Heart right ventricle (tissue), 16 donors: ENCODE measurements at regions of chr19 and their contacts with region 1.

Region 1: GRCh38 chr19:39532233-39533002 is at the start of gene EID2B:
- DNase-seq: peak; percentile 94 to 97
- ATAC-seq: peak; percentile 97 to 99 (median 99)
- H3K4me3 ChIP-seq: peak within 1 kb of the TSS; percentile 73 to 96 (median 88)
- H3K27ac ChIP-seq: peak within 1 kb of the TSS; percentile 42 to 93 (median 86)
- H3K4me1 ChIP-seq: peaks cover 2 to 27% (median 20%) of the 10 kb centered on the region in 9 donors
- H3K27me3 ChIP-seq: no peaks in the 10 kb centered on the region
- CTCF ChIP-seq: peak; percentile 96 to 99 (median 98)
- total RNA-seq, gene EID2B: 2.2 to 4.7 (median 3.5) TPM

Region 2: DNA sequence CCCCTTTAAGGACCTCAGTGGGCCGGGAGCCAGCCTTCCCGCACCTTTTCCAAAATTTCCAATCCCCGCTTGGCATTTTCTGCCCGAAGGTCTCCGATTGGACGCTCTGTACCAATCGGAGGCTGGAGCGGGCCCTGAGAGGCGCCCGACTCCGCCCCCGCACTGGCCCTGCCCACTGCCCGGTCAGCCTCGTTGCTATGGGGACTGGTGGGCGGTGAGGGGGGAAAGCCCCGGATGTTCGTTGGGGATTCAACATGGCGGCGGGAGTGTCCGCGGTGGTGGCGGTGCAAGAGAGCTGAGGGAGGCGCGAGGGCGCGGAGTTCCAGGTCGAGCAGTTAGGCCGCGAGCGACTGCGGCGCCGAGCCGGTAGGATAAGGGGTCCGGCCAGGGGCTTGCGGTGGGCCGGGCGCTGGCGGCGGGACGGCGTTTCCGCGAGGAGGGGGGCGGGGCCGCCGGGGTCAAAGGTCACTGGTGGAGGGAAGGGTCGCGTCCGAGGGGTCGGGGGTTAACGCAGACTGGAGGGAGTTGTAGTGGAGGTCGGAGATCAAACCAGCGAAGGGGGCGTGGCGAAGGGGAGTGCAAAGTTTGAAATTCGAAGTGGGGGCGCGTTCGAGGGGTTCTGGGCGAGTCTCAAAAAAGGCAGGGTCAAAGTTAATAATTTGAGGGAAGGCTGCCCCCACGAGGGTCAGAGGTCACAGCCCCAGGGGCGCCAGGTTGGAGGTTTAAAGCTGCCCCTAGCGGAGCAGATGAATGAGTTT is 406.7 kb before region 1 on chr19 and contains the start of gene PAK4:
- intact Hi-C with region 1: loop called in 2 of 10 experiments (anchors 10 kb)
- DNase-seq: peak; percentile 96 to 98
- ATAC-seq: peak; percentile 99 to 100 (median 100)
- H3K4me3 ChIP-seq: peak within 1 kb of the TSS; percentile 45 to 85 (median 80)
- H3K27ac ChIP-seq: peak within 1 kb of the TSS in 9 of 10 donors; percentile 50 to 89 (median 83)
- H3K4me1 ChIP-seq: peaks cover 2 to 61% (median 31%) of the 10 kb centered on the region in 9 donors
- H3K27me3 ChIP-seq: peaks cover 0 to 11% (median 5%) of the 10 kb centered on the region in 7 donors
- CTCF ChIP-seq: no peak
- total RNA-seq, gene PAK4: 11.7 to 22.4 (median 16.1) TPM

Region 3: DNA sequence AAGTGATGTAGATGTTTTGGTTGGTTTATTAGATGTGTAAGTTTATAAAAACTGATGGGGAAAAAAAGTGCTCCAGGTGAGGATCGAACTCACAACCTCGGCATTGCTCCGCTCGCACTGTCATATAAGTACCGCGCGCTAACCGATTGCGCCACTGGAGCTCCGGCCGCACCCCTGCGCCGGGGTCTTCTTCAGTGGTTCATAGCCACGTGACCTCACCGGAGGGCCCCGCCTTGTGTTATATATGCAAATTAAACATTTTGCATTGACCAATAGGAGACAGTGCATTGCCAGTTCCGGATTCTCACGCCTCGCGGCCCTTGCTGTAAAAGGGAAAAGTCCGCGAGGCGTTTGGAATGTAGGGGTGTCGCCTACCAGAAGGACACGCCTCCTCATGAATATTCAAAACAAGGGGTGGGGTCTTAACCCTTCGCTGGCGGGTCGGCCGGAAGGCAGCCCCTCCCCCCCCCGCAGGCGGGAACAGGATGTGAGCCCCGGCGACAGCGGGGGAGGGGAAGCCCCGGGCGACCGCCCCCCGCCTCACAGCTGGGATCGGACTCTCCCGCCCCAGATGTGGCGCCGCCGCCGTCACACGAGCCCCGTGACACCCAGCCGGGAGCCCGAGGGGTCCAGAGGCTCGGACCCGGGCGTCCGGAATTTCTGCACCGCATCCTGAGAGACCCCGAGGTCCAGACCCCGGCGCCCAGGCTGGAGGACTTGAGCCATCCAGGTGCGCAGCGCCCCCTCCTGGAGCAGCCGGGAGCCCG is 120.1 kb before region 1 on chr19 and contains the start of gene PLEKHG2:
- intact Hi-C with region 1: loop called in 1 of 10 experiments (anchors 10 kb)
- DNase-seq: peak; percentile 94 to 98
- ATAC-seq: peak; percentile 57 to 74 (median 72)
- H3K4me3 ChIP-seq: peak within 1 kb of the TSS; percentile 66 to 98 (median 86)
- H3K27ac ChIP-seq: peak within 1 kb of the TSS; percentile 94 to 100 (median 99)
- H3K4me1 ChIP-seq: peaks cover 11 to 71% (median 53%) of the 10 kb centered on the region in 9 donors
- H3K27me3 ChIP-seq: no peaks in the 10 kb centered on the region
- CTCF ChIP-seq: peak; percentile 68 to 93 (median 88)
- total RNA-seq, gene PLEKHG2: 8.3 to 23.1 (median 15.1) TPM

Region 4: DNA sequence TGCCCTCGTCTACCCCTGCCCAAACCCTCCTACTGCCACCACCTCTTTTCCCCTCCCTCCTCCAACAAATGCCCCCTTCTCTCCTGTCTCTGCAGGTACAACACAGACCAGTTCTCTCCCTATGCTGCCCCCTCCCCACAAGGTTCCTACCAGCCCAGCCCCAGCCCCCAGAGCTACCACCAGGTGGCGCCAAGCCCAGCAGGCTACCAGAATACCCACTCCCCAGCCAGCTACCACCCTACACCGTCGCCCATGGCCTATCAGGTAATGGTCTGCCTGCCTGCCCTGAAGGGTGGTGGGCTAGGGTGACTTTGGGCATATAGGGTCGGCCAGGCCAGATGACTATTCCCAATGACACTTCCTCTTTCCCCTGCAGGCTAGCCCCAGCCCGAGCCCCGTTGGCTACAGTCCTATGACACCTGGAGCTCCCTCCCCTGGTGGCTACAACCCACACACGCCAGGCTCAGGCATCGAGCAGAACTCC is 58.2 kb before region 1 on chr19:
- intact Hi-C with region 1: loop called in 8 of 10 experiments (anchors 1 to 10 kb)
- DNase-seq: peak; percentile 44 to 65
- ATAC-seq: peak; percentile 53 to 77 (median 72)
- H3K4me3 ChIP-seq: no peak overlapping the region
- H3K27ac ChIP-seq: peak overlapping the region in 1 of 10 donors; percentile 11
- H3K4me1 ChIP-seq: peaks cover 0 to 7% (median 0%) of the 10 kb centered on the region in 9 donors
- H3K27me3 ChIP-seq: no peaks in the 10 kb centered on the region
- CTCF ChIP-seq: peak; percentile 61 to 79 (median 73)

Region 5: DNA sequence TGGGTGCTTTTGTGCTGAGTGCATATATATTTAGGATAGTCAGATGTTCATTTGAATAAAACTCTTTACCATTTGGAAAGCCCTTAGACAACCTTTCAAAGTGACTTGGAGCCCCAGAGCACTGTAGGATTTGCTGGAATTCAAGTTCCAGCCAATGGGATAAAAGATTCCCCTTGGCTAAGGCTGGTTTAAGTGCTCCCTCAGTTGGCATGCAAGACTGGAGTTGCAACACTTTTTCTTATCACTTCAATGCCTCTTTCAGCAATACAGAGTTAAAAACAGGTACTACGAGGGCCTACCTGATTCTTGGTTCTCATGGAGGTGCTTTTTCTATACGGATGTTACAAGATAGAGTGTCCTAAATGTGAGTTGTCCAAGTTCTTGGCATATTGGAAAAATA is 44.1 kb after region 1 on chr19:
- intact Hi-C with region 1: no loop called
- DNase-seq: no peak
- ATAC-seq: no peak
- H3K4me3 ChIP-seq: no peak overlapping the region
- H3K27ac ChIP-seq: no peak overlapping the region
- H3K4me1 ChIP-seq: no peaks in the 10 kb centered on the region
- H3K27me3 ChIP-seq: peaks cover 0 to 16% (median 3%) of the 10 kb centered on the region in 7 donors
- CTCF ChIP-seq: no peak

Region 6: GRCh38 chr19:39590265-39590664 is 57.8 kb after region 1 on chr19:
- intact Hi-C with region 1: no loop called
- DNase-seq: no peak
- ATAC-seq: no peak
- H3K4me3 ChIP-seq: no peak overlapping the region
- H3K27ac ChIP-seq: no peak overlapping the region
- H3K4me1 ChIP-seq: no peaks in the 10 kb centered on the region
- H3K27me3 ChIP-seq: peaks cover 0 to 19% (median 10%) of the 10 kb centered on the region in 7 donors
- CTCF ChIP-seq: no peak

Region 7: GRCh38 chr19:39833464-39834286 is 301.3 kb after region 1 on chr19 and contains the start of gene DYRK1B:
- intact Hi-C with region 1: loop called in 1 of 10 experiments (anchors 10 kb)
- DNase-seq: peak; percentile 98 to 99
- ATAC-seq: peak; percentile 94 to 97 (median 96)
- H3K4me3 ChIP-seq: peak within 1 kb of the TSS; percentile 69 to 97 (median 82)
- H3K27ac ChIP-seq: peak within 1 kb of the TSS; percentile 61 to 94 (median 90)
- H3K4me1 ChIP-seq: peaks cover 0 to 27% (median 23%) of the 10 kb centered on the region in 9 donors
- H3K27me3 ChIP-seq: no peaks in the 10 kb centered on the region
- CTCF ChIP-seq: no peak
- total RNA-seq, gene DYRK1B: 10.1 to 43.5 (median 37.6) TPM

Region 8: DNA sequence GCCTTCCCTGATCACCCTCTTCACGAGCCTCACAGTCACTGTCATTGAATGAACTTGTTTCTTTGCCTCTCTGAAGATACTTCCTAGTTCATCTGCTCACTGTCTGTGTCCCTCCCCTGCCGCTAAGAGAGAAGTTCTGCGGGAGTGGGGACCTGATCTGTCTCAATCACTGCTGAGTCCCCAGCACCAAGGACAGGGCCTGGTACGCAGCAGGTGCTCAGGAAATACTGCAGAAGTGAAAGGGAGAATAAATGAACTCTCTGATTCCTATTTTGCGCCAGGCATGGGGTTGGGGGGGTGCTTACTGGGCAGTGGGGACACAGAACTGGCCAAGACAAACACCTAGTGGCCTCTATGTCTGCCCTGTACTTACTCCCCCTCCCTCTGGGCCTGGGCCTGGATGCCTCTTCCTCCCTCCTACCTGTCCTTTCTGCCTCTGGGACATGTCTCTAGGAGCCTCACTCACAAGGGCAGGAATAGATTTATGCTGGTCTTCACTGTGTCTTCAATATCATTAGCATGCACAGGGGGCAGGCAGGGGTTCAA is 384.5 kb after region 1 on chr19:
- intact Hi-C with region 1: no loop called
- DNase-seq: no peak
- ATAC-seq: no peak
- H3K4me3 ChIP-seq: no peak overlapping the region
- H3K27ac ChIP-seq: no peak overlapping the region
- H3K4me1 ChIP-seq: no peaks in the 10 kb centered on the region
- H3K27me3 ChIP-seq: peaks cover 0 to 50% (median 33%) of the 10 kb centered on the region in 7 donors
- CTCF ChIP-seq: no peak

Region 9: GRCh38 chr19:40174092-40174491 is 641.7 kb after region 1 on chr19:
- intact Hi-C with region 1: no loop called
- DNase-seq: no peak
- ATAC-seq: no peak
- H3K4me3 ChIP-seq: no peak overlapping the region
- H3K27ac ChIP-seq: no peak overlapping the region
- H3K4me1 ChIP-seq: no peaks in the 10 kb centered on the region
- H3K27me3 ChIP-seq: peaks cover 0 to 7% (median 0%) of the 10 kb centered on the region in 7 donors
- CTCF ChIP-seq: no peak